Sigmoid colon (tissue), 7 donors: ENCODE measurements at regions of chr4 and their contacts with region 1.

Region 1: DNA sequence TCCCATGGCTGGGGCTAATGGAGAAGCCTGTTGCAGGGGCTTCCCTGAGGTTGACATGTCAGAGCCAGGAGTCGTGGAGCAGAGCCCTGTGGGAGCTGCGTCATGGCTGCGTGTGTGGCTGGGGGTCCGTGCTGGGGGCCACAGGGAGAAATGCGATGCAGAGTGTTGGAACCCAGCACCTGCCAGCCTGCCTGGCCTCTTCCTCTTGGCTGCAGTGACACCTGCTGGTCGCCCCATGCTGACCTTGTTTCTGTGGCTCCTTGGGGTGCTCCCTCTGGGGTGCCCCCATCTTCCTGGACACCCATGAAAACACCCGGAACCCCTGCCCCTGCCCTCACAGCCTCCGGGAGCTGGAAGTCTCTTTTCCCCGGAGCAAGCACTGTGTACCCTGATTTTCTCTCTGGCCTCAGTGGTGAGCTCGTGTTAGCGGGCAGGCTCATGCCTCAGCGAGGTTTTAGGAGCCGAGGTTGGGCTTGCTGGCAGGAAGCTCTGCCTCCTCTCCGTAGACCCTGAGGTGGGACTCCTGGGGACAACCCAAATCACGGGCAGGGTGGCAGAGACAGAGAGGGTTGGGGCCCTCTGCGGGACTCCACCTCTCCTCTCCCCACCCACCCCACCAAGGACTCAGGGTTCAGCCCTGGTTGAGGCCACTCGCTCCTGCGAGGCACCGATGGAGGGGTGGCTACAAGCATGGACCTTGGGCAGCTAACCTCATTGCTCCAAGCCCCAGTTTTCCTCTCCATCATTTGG is 103.7 kb downstream of the SORCS2 start:
- DNase-seq: no peak
- H3K4me3 ChIP-seq: no peak overlapping the region
- H3K27ac ChIP-seq: peak overlapping the region in 3 of 4 donors; percentile 46 to 62 (median 61)
- H3K4me1 ChIP-seq: peaks cover 0 to 22% (median 21%) of the 10 kb centered on the region in 4 donors
- H3K27me3 ChIP-seq: no peaks in the 10 kb centered on the region
- CTCF ChIP-seq: peak; percentile 50 to 81 (median 59)
- EP300 ChIP-seq: no peak
- POLR2A ChIP-seq: no peak

Region 2: DNA sequence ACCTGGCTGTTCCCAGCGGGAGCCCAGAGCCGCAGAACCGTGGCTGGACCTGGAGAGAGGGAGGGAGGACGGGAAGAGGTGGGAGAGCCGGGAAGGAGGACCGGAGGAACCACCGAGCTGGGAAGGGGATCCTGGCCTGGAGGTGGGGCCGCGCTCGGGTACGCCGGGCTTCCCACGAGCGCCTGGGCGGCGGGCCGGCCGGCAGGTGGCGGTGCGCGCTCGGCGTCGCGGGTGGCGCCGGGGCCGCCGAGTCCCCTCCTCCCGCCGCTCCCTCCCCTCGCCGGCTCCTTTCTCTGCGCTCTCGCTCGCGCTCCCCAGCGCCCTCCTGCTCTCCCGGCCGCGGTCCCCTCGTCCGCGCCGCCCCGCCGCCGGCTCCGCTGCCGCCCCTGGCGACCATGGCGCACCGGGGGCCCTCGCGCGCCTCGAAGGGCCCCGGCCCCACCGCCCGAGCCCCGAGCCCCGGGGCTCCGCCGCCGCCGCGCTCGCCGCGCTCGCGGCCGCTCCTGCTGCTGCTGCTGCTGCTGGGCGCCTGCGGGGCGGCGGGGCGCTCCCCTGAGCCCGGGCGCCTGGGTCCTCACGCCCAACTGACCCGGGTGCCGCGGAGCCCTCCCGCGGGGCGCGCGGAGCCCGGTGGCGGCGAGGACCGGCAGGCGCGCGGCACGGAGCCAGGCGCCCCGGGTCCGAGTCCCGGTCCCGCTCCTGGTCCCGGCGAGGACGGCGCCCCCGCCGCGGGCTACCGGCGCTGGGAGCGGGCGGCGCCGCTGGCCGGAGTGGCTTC is 103.6 kb before region 1 on chr4 and contains the start of gene SORCS2:
- intact Hi-C with region 1: loop called (anchors 1 kb)
- DNase-seq: peak; percentile 83
- H3K4me3 ChIP-seq: peak within 1 kb of the TSS; percentile 26 to 56 (median 50)
- H3K27ac ChIP-seq: peak within 1 kb of the TSS in 2 of 4 donors; percentile 2 to 41
- H3K4me1 ChIP-seq: peaks cover 0 to 29% (median 23%) of the 10 kb centered on the region in 4 donors
- H3K27me3 ChIP-seq: peaks cover 0 to 44% (median 28%) of the 10 kb centered on the region in 3 donors
- CTCF ChIP-seq: peak in 3 of 4 experiments; percentile 13 to 70 (median 40)
- EP300 ChIP-seq: no peak
- POLR2A ChIP-seq: no peak
- total RNA-seq, gene SORCS2: 2.0 to 6.4 (median 4.0) TPM

Region 3: GRCh38 chr4:7206911-7207567 is 89.0 kb before region 1 on chr4:
- intact Hi-C with region 1: loop called (anchors 5 kb)
- DNase-seq: peak; percentile 95
- H3K4me3 ChIP-seq: peak overlapping the region in 2 of 4 donors; percentile 8 to 12
- H3K27ac ChIP-seq: peak overlapping the region; percentile 77 to 88 (median 82)
- H3K4me1 ChIP-seq: peaks cover 0 to 45% (median 35%) of the 10 kb centered on the region in 4 donors
- H3K27me3 ChIP-seq: no peaks in the 10 kb centered on the region
- CTCF ChIP-seq: no peak
- EP300 ChIP-seq: no peak
- POLR2A ChIP-seq: no peak

Region 4: GRCh38 chr4:7238300-7238960 is 57.7 kb before region 1 on chr4:
- intact Hi-C with region 1: loop called (anchors 5 kb)
- DNase-seq: no peak
- H3K4me3 ChIP-seq: no peak overlapping the region
- H3K27ac ChIP-seq: peak overlapping the region in 2 of 4 donors; percentile 24 to 47
- H3K4me1 ChIP-seq: peaks cover 0 to 30% (median 19%) of the 10 kb centered on the region in 4 donors
- H3K27me3 ChIP-seq: no peaks in the 10 kb centered on the region
- CTCF ChIP-seq: no peak
- EP300 ChIP-seq: no peak
- POLR2A ChIP-seq: no peak

Region 5: GRCh38 chr4:7247946-7248345 is 48.1 kb before region 1 on chr4:
- intact Hi-C with region 1: loop called (anchors 2 kb)
- DNase-seq: no peak
- H3K4me3 ChIP-seq: no peak overlapping the region
- H3K27ac ChIP-seq: no peak overlapping the region
- H3K4me1 ChIP-seq: peaks cover 0 to 49% (median 35%) of the 10 kb centered on the region in 4 donors
- H3K27me3 ChIP-seq: no peaks in the 10 kb centered on the region
- CTCF ChIP-seq: no peak
- EP300 ChIP-seq: no peak
- POLR2A ChIP-seq: no peak

Region 6: GRCh38 chr4:7434766-7435150 is 138.7 kb after region 1 on chr4 and contains the start of gene PSAPL1:
- intact Hi-C with region 1: no loop called
- DNase-seq: no peak
- H3K4me3 ChIP-seq: no peak within 1 kb of the TSS
- H3K27ac ChIP-seq: no peak within 1 kb of the TSS
- H3K4me1 ChIP-seq: peaks cover 0 to 7% (median 0%) of the 10 kb centered on the region in 4 donors
- H3K27me3 ChIP-seq: no peaks in the 10 kb centered on the region
- CTCF ChIP-seq: no peak
- EP300 ChIP-seq: no peak
- POLR2A ChIP-seq: no peak
- total RNA-seq, gene PSAPL1: not detected

Region 7: GRCh38 chr4:7719354-7720174 is 423.5 kb after region 1 on chr4:
- intact Hi-C with region 1: loop called (anchors 5 kb)
- DNase-seq: no peak
- H3K4me3 ChIP-seq: no peak overlapping the region
- H3K27ac ChIP-seq: no peak overlapping the region
- H3K4me1 ChIP-seq: peaks cover 0 to 7% (median 5%) of the 10 kb centered on the region in 4 donors
- H3K27me3 ChIP-seq: no peaks in the 10 kb centered on the region
- CTCF ChIP-seq: peak; percentile 55 to 85 (median 69)
- EP300 ChIP-seq: no peak
- POLR2A ChIP-seq: no peak